ENCODE measurements at regions of chr11 and their contacts with region 1.

Region 1: DNA sequence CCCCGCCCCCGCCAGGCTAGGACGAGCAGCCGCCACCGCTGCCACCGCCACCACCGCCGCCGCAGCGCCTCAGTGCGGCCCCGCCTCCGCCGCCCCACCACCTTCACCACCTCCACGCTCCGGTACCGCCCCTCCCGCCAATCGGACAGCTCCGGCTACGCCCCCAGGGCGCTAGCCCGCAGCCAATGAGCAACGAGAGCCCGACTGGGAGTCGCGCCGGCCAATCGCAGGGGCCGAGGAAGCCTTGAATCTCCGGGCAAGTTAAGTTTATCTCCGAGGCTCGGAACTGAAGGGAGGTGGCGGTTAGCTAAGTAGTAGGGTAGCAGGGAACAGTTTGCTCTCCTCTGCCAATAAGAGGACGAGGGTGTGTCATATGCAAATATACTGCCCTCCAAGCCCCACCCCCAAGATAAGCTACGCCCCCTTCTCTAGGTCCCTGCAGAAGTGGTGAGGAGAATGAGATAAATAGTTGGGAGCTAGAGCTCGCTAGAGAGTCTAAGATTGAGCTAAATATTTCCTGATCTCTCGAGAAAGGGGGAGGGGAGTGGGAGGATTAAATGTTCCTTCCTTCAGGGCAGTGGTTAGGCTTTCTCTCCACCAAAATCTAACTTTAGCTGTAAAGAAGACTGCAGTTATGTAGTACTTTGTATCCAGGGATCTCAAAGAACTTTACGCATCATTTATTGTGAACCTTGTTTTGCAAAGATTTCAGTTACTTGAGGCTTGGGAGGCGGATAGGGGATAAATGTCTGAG is at the start of gene SESN3:
- DNase-seq: peak; percentile 96
- ATAC-seq: peak; percentile 92
- H3K4me3 ChIP-seq: peak within 1 kb of the TSS; percentile 68
- H3K27ac ChIP-seq: no peak within 1 kb of the TSS
- H3K4me1 ChIP-seq: 0 out of 2 replicates have a peak, but pooled peaks cover 10% of the 10 kb centered on the region
- H3K27me3 ChIP-seq: peaks cover 63% of the 10 kb centered on the region
- CTCF ChIP-seq: no peak
- total RNA-seq, gene SESN3: 0.23 and 0.55 TPM in 2 replicates

Region 2: GRCh38 chr11:95165638-95166037 is 65.7 kb before region 1 on chr11:
- CTCF ChIA-PET with region 1: no interaction called
- POLR2A ChIA-PET with region 1: no interaction called
- intact Hi-C with region 1: loop called (anchors 2 kb)
- DNase-seq: no peak
- ATAC-seq: peak; percentile 93
- H3K4me3 ChIP-seq: no peak overlapping the region
- H3K27ac ChIP-seq: no peak overlapping the region
- H3K4me1 ChIP-seq: no peaks in the 10 kb centered on the region
- H3K27me3 ChIP-seq: peaks cover 20% of the 10 kb centered on the region
- CTCF ChIP-seq: no peak

Region 3: GRCh38 chr11:95790123-95790932 is 559.0 kb after region 1 on chr11 and contains the start of gene CEP57:
- CTCF ChIA-PET with region 1: no interaction called
- POLR2A ChIA-PET with region 1: no interaction called
- intact Hi-C with region 1: loop called (anchors 1 kb)
- DNase-seq: peak; percentile 99
- ATAC-seq: peak; percentile 73
- H3K4me3 ChIP-seq: peak within 1 kb of the TSS; percentile 86
- H3K27ac ChIP-seq: peak within 1 kb of the TSS; percentile 87
- H3K4me1 ChIP-seq: peaks cover 42% of the 10 kb centered on the region
- H3K27me3 ChIP-seq: no peaks in the 10 kb centered on the region
- CTCF ChIP-seq: no peak
- total RNA-seq, gene CEP57: 36.7 and 38.1 TPM in 2 replicates

Measured in PC-3 (cell line).